ENCODE measurements at regions of chr7 and their contacts with region 1.

Region 1: DNA sequence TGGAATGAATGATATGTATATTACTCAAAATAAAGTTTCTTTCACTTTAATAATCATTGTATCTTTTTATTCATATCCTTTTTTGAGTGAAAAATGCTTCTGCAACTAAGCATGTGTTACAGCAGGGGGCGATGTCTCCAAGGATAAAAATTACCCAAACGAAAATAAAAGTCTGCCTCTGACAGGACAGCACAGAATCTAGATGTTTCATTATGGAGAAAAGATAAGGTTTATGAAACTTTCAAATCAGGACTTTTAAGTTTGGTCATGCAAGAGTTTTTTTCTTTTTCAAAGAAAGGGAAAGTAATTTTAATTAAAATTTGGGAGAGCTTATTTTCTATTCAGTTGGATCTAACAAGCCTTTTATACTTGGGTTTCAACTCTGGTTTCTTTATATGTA is 48.4 kb downstream of the TES start:
- DNase-seq: peak in 1 of 5 donors; percentile 27
- ATAC-seq: peak in 3 of 4 donors; percentile 36 to 69 (median 69)
- H3K4me3 ChIP-seq: no peak overlapping the region
- H3K27ac ChIP-seq: peak overlapping the region in 3 of 12 donors; percentile 6 to 49 (median 32)
- H3K4me1 ChIP-seq: peaks cover 0 to 9% (median 6%) of the 10 kb centered on the region in 12 donors
- H3K27me3 ChIP-seq: no peaks in the 10 kb centered on the region
- CTCF ChIP-seq: peak; percentile 56 to 93 (median 84)
- POLR2A ChIP-seq: no peak

Region 2: DNA sequence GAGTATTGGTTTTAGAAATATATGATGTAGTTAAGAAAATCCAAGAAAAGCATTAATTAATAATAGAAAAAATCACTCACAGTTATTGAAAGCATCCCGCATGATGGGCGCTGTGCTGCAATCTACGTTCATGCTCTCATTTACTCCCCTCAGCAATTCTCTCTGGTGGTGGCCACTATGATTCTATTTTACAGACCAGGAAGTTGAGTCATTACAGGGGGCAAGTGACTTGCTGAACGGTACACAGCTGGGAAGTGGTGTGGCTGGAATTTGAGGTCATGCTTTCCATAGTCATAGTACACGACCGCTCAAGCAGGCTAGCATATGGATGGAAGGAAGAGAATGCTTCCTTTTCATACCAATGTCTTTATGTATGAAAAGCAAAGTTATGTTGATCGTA is 69.0 kb after region 1 on chr7:
- intact Hi-C with region 1: loop called in 1 of 10 experiments (anchors 10 kb)
- DNase-seq: no peak
- ATAC-seq: no peak
- H3K4me3 ChIP-seq: no peak overlapping the region
- H3K27ac ChIP-seq: peak overlapping the region in 4 of 12 donors; percentile 3 to 59 (median 20)
- H3K4me1 ChIP-seq: peaks cover 0 to 49% (median 16%) of the 10 kb centered on the region in 12 donors
- H3K27me3 ChIP-seq: no peaks in the 10 kb centered on the region
- CTCF ChIP-seq: no peak
- POLR2A ChIP-seq: no peak

Region 3: GRCh38 chr7:116340943-116341907 is 82.5 kb after region 1 on chr7:
- intact Hi-C with region 1: loop called in 2 of 10 experiments (anchors 5 kb)
- DNase-seq: no peak
- ATAC-seq: peak in 3 of 4 donors; percentile 60 to 70 (median 65)
- H3K4me3 ChIP-seq: no peak overlapping the region
- H3K27ac ChIP-seq: peak overlapping the region in 5 of 12 donors; percentile 36 to 62 (median 48)
- H3K4me1 ChIP-seq: peaks cover 0 to 31% (median 16%) of the 10 kb centered on the region in 12 donors
- H3K27me3 ChIP-seq: no peaks in the 10 kb centered on the region
- CTCF ChIP-seq: peak in 7 of 12 donors; percentile 13 to 44 (median 33)
- POLR2A ChIP-seq: no peak

Region 4: DNA sequence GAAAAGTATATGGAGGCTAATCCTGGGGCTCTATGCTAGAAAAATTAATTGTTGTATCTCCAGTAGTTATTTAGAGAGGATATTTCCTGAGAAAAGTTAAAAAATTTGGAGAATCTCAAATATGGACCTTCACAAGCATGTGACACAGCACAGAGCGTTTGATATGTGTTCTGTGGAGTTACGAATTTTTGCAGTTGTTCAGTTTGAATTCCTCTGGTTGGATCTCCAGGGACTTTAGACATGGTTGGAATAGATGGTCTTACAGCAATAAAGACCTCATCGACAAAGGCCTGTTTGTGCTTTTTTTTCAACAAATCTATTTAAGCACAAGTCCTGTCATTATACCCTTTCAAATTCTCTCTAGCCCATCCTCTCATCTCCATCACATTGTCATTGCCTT is 89.6 kb after region 1 on chr7:
- intact Hi-C with region 1: loop called in 3 of 10 experiments (anchors 5 kb)
- DNase-seq: no peak
- ATAC-seq: no peak
- H3K4me3 ChIP-seq: no peak overlapping the region
- H3K27ac ChIP-seq: no peak overlapping the region
- H3K4me1 ChIP-seq: peaks cover 0 to 12% (median 4%) of the 10 kb centered on the region in 12 donors
- H3K27me3 ChIP-seq: no peaks in the 10 kb centered on the region
- CTCF ChIP-seq: no peak
- POLR2A ChIP-seq: no peak

Region 5: GRCh38 chr7:116380025-116380424 is 121.3 kb after region 1 on chr7:
- intact Hi-C with region 1: no loop called
- DNase-seq: no peak
- ATAC-seq: peak in 3 of 4 donors; percentile 62 to 70 (median 65)
- H3K4me3 ChIP-seq: no peak overlapping the region
- H3K27ac ChIP-seq: peak overlapping the region in 2 of 12 donors; percentile 1 to 8
- H3K4me1 ChIP-seq: peaks cover 0 to 18% (median 8%) of the 10 kb centered on the region in 12 donors
- H3K27me3 ChIP-seq: no peaks in the 10 kb centered on the region
- CTCF ChIP-seq: no peak
- POLR2A ChIP-seq: no peak

Region 6: GRCh38 chr7:116443101-116443523 is 184.4 kb after region 1 on chr7:
- intact Hi-C with region 1: loop called in 3 of 10 experiments (anchors 10 kb)
- DNase-seq: no peak
- ATAC-seq: peak in 2 of 4 donors; percentile 27 to 40
- H3K4me3 ChIP-seq: no peak overlapping the region
- H3K27ac ChIP-seq: peak overlapping the region in 5 of 12 donors; percentile 3 to 81 (median 59)
- H3K4me1 ChIP-seq: peaks cover 3 to 63% (median 40%) of the 10 kb centered on the region in 12 donors
- H3K27me3 ChIP-seq: no peaks in the 10 kb centered on the region
- CTCF ChIP-seq: no peak
- POLR2A ChIP-seq: no peak

Region 7: GRCh38 chr7:116809636-116810266 is 551.0 kb after region 1 on chr7:
- intact Hi-C with region 1: loop called (anchors 2 to 5 kb)
- DNase-seq: peak in 1 of 5 donors; percentile 36
- ATAC-seq: peak; percentile 68 to 80 (median 74)
- H3K4me3 ChIP-seq: no peak overlapping the region
- H3K27ac ChIP-seq: no peak overlapping the region
- H3K4me1 ChIP-seq: peaks cover 0 to 5% (median 0%) of the 10 kb centered on the region in 12 donors
- H3K27me3 ChIP-seq: no peaks in the 10 kb centered on the region
- CTCF ChIP-seq: peak; percentile 52 to 82 (median 66)
- POLR2A ChIP-seq: no peak

Measured in heart left ventricle (tissue), 16 donors.